ENCODE measurements at regions of chr11 and their contacts with region 1.

Region 1: DNA sequence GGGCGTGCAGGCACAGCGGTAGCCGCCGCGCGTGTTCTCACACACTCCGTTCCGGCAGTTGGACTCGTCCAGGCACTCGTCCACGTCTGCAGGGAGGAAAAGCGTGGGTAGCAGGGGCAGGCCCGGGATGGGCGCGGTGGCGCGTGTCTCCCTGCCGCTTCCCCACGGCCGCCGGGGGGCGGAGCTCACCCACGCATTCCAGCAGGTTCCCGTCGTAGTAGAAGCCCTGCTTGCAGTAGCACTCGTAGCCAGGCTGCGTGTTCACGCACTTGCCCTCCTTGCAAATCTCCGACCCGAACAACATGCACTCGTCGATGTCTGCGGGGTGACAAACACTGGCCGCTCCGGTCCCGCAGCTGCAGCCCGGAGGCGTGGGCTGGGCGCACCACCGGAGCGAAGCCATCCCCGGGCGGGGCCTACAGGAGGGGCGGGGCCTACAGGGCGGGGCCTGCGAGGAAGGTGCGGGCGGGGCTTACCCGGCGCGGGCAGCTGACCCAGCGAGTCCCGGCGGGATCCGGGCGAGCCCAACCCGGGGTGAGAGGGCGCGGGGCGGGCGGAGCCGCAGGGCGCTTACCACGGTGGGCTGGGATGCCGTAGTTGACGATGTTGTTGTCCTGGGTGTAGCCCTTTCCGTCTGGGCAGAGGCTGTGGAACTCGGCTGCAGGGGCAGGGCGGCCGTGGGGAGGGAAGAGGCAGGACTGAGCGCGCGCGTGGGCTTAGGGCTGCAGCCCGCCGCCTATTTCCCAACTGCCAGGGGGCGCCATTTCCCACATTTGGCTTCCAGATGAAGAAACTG is 15.6 kb downstream of the SCYL1 start:
- DNase-seq: peak; percentile 95
- H3K4me3 ChIP-seq: peak overlapping the region; percentile 31 to 52 (median 50)
- H3K27ac ChIP-seq: peak overlapping the region; percentile 90 to 94 (median 91)
- H3K4me1 ChIP-seq: peaks cover 0 to 30% (median 26%) of the 10 kb centered on the region in 4 donors
- H3K27me3 ChIP-seq: no peaks in the 10 kb centered on the region
- CTCF ChIP-seq: peak; percentile 90 to 99 (median 94)
- EP300 ChIP-seq: no peak
- POLR2A ChIP-seq: peak; percentile 8 to 29

Region 2: DNA sequence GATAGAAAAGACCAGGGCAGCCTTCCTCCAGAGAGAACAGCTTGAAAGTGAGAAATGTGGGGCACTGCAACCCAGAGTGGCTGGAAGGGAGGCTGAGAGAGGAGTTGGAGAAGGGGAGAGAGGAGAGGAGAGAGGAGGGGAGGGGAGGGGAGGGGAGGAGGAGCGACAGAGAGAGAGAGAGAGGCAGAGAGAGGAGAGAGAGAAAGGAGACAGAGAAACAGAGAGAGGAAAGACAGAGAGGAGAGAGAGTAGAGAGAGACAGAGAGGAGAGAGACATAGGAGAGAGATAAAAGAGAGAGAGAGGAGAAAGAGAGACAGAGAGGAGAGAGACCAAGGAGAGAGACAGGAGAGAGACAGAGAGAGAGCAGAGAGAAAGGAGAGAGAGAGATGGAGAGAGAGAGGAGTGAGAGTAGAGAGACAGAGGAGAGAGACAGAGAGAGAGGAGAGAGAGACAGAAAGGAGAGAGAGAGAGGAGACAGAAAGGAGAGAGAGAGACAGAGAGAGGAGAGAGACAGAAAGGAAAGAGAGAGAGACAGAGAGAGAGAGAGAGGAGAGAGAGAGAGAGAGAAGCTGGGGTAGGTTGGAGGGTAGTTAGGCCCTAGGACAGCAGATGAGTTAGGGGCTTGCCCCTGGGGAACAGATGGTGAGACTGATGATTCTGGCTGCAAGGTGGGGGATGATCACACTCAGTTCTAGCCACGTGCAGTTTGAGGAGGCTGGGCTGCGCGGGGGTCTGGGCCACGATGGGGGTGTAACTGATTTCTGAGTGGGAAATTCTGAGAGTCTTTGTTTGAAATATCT is 24.2 kb before region 1 on chr11:
- intact Hi-C with region 1: no loop called
- DNase-seq: peak; percentile 57
- H3K4me3 ChIP-seq: no peak overlapping the region
- H3K27ac ChIP-seq: peak overlapping the region in 1 of 4 donors; percentile 14
- H3K4me1 ChIP-seq: no peaks in the 10 kb centered on the region
- H3K27me3 ChIP-seq: no peaks in the 10 kb centered on the region
- CTCF ChIP-seq: no peak
- EP300 ChIP-seq: no peak
- POLR2A ChIP-seq: no peak

Region 3: GRCh38 chr11:65558002-65558931 is 17.8 kb after region 1 on chr11 and contains the start of gene LTBP3:
- intact Hi-C with region 1: loop called (anchors 2 kb)
- DNase-seq: peak; percentile 94
- H3K4me3 ChIP-seq: peak within 1 kb of the TSS; percentile 55 to 85 (median 72)
- H3K27ac ChIP-seq: peak within 1 kb of the TSS; percentile 96 to 99 (median 98)
- H3K4me1 ChIP-seq: peaks cover 0 to 71% (median 66%) of the 10 kb centered on the region in 4 donors
- H3K27me3 ChIP-seq: no peaks in the 10 kb centered on the region
- CTCF ChIP-seq: no peak
- EP300 ChIP-seq: peak in 1 of 4 donors; percentile 45
- POLR2A ChIP-seq: no peak
- total RNA-seq, gene LTBP3: 79.6 to 268 (median 117) TPM

Region 4: DNA sequence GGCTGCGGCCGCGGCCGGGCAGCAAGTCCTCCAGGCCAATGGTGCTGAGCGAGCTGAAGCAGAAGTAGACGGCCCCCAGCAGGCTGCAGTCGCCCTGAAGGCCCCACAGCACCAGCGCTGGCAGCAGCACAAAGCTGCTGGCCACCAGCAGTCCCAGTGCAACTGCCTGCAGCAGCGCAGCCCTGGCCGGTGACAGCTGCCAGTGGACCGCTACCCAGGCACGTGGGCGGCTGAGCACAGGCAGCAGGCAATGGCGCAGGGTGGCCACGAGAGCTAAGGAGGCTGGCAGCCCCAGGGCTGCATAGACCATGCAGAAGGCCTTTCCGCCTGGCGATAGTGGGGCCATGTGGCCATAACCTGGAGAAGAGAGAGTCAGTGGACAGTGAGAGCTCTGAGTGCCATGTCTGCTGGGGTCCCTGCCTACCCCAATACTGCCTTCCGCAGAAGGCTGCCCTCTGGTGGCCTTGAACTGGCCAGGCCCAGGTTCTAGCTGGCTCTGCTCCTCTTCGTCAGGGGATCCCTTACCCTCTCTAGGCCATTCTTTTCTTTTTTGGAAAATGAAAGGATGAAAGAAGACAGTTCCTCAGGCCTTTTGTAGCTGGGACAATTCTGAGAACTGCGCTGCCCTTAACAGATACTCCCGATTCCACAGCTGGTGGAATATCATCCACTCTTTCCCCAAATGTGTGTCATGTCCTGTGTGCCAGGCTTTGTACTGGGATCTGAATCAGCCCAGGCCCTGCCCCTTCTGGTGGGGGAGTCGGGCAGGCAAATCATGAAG is 53.2 kb after region 1 on chr11:
- intact Hi-C with region 1: loop called (anchors 1 kb)
- DNase-seq: peak; percentile 75
- H3K4me3 ChIP-seq: no peak overlapping the region
- H3K27ac ChIP-seq: peak overlapping the region; percentile 32 to 81 (median 53)
- H3K4me1 ChIP-seq: peaks cover 0 to 39% (median 32%) of the 10 kb centered on the region in 4 donors
- H3K27me3 ChIP-seq: no peaks in the 10 kb centered on the region
- CTCF ChIP-seq: peak; percentile 76 to 93 (median 80)
- EP300 ChIP-seq: no peak
- POLR2A ChIP-seq: no peak

Region 5: DNA sequence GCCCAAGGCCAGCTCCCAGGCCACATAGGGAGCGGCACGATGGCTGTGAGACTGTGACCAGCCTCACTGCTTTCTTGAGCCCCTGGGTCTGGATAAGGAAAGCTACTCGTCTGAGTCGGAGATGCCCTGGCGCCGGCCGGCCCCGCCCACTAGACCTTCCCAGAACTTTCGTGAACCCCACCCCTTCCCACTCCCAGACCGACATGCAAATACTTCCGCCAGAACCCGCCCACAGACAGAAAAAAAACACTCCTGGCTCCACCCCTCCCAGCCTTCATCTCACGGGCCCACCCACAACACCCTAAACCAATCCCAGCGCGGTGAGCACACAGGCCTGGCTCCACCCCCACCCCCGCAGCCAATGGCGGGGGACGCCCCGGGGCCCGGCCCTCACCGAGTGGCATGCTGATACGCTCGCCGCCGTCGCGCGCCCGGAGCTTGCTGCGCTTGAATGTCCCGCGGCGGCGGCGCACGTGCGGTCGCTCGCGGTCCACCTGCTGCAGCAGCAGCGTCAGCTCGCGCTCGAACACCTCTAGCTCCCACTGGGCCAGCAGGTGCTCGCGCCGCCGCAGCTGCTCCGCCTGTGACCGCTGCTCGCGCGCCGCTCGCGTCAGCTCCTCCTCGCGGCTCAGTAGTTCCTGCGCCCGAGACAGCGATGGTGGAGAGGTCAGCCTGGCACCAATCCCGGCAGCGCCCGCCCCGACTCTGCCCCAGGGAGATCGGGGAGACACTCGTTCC is 66.5 kb after region 1 on chr11:
- intact Hi-C with region 1: loop called (anchors 5 kb)
- DNase-seq: peak; percentile 99
- H3K4me3 ChIP-seq: peak overlapping the region; percentile 11 to 42 (median 34)
- H3K27ac ChIP-seq: peak overlapping the region; percentile 76 to 88 (median 86)
- H3K4me1 ChIP-seq: peaks cover 0 to 48% (median 42%) of the 10 kb centered on the region in 4 donors
- H3K27me3 ChIP-seq: no peaks in the 10 kb centered on the region
- CTCF ChIP-seq: no peak
- EP300 ChIP-seq: peak in 1 of 4 donors; percentile 27
- POLR2A ChIP-seq: no peak

Measured in sigmoid colon (tissue), 7 donors.